MCF 10A (cell line): ENCODE measurements at regions of chr22 and their contacts with region 1.

Region 1: GRCh38 chr22:35376728-35377472 is 4.0 kb upstream of the HMOX1 start:
- DNase-seq: peak; percentile 98
- H3K4me3 Mint-ChIP-seq: no peak overlapping the region
- H3K27ac Mint-ChIP-seq: peak overlapping the region; percentile 93
- H3K4me1 Mint-ChIP-seq: peaks cover 35% of the 10 kb centered on the region
- H3K27me3 Mint-ChIP-seq: no peaks in the 10 kb centered on the region
- CTCF ChIP-seq: no peak

Region 2: GRCh38 chr22:35128637-35129036 is 248.3 kb before region 1 on chr22:
- CTCF ChIA-PET with region 1: no interaction called
- POLR2A ChIA-PET with region 1: no interaction called
- intact Hi-C with region 1: no loop called
- DNase-seq: no peak
- H3K4me3 Mint-ChIP-seq: no peak overlapping the region
- H3K27ac Mint-ChIP-seq: no peak overlapping the region
- H3K4me1 Mint-ChIP-seq: no peaks in the 10 kb centered on the region
- H3K27me3 Mint-ChIP-seq: peaks cover 6% of the 10 kb centered on the region
- CTCF ChIP-seq: no peak

Region 3: DNA sequence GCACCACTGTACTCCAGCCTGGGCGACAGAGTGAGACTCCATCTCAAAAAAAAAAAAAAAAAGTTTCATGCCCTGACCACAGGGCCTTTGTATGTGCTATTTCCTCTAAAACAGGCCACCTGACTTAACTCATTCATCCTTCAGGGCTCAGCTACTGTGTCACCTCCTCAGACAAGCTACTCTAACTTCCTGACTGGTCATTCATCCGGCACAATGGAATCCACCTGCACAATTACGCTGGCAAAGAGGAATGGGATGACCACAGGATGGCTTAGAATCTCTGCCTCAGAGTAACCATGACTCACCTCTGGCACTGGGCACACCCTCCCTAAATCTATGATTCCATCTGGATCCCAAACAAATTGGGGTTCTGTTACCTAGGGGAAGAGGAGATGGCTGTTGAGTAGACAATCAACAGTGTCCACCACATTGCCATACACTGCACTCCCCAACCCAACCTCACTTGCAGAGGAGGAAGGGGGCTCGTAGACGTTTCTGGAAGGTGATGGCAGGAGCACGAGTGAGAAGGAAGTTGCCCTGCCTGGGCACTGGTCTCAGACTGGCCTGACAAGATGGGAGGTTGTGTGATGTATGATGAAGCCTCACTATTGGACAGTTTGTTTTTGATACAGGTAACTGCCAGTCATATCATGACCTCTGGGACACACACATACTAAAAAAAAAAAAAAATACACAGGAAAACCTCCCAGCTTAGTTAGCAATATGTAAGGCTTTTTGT is 18.8 kb before region 1 on chr22:
- CTCF ChIA-PET with region 1: no interaction called
- POLR2A ChIA-PET with region 1: interaction called, 3 read pairs
- intact Hi-C with region 1: loop called (anchors 2 kb)
- DNase-seq: peak; percentile 74
- H3K4me3 Mint-ChIP-seq: no peak overlapping the region
- H3K27ac Mint-ChIP-seq: no peak overlapping the region
- H3K4me1 Mint-ChIP-seq: peaks cover 6% of the 10 kb centered on the region
- H3K27me3 Mint-ChIP-seq: no peaks in the 10 kb centered on the region
- CTCF ChIP-seq: no peak

Region 4: DNA sequence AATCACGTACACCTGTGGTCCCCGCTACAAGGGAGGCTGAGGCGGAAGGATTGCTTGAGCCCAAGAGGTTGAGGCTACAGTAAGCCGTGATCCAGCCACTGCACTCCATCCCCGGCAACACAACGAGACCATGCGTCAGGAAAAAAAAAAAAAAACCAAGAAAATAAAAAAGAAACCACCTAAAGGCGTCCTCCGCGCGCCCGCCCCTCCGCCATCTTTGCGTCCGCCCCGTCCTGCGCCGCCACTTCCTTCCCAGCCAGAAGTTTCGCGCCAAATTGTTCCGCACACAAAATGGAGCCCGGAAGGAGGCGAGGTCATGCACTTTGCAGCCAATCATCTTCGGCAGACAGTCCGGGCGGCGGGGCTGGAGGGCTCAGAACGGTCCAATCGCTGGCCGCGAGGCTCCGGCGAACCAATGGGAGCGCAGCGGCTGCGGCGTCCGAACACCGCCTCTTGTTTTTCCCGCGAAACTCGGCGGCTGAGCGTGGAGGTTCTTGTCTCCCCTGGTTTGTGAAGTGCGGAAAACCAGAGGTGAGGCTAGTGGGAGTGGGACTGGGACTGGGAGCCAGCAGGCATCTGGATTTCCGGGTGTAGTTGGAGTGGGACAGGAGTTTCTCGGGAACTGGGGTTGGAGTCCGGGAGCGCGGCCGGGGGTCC is 22.9 kb after region 1 on chr22 and contains the start of gene MCM5:
- CTCF ChIA-PET with region 1: no interaction called
- POLR2A ChIA-PET with region 1: interaction called, 3 read pairs
- intact Hi-C with region 1: loop called (anchors 2 kb)
- DNase-seq: peak; percentile 97
- H3K4me3 Mint-ChIP-seq: peak within 1 kb of the TSS; percentile 99
- H3K27ac Mint-ChIP-seq: peak within 1 kb of the TSS; percentile 90
- H3K4me1 Mint-ChIP-seq: peaks cover 13% of the 10 kb centered on the region
- H3K27me3 Mint-ChIP-seq: no peaks in the 10 kb centered on the region
- CTCF ChIP-seq: no peak
- total RNA-seq, gene MCM5: 26.2 and 35.0 TPM in 2 replicates

Region 5: DNA sequence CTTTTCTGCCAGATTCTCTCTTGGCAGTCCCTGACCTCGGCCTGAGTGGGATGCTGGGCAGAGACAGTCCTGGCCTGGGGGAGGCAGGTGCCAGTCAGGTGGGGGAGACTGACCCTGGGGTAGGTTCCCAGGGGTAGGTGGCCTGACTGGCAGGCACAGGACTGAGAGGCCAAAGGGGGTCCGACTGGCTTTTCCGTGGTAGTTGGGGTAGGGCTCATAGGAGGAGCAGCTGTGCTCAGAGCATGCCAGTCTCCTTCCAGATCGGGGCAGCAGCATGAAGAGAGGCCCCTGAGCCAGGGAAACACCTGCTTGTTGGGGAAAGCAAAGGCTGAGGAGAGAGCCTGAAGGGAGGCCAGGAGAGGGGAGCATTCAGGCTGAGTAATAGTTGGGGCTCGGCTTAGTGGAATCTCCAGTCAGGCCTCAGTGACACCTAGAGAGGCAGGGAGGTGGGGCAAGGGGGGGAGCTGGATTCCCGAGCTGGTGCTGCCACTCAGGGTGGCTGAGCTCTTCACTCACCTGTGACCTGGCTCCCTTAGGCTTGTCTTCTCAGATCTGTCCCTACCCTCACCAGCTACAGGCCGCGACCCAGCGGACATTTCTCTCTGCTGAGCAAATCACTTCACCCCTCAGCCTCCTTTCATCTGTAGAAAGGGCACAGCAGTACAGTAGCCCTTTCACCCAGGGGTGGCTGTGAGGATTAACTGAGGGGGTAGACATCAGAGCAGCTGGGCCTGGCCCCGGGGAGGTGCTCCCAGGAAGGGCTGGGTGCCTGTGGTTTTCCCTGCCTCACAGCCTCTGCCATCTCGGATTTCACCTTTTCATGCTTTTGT is 49.3 kb after region 1 on chr22:
- CTCF ChIA-PET with region 1: no interaction called
- POLR2A ChIA-PET with region 1: no interaction called
- intact Hi-C with region 1: no loop called
- DNase-seq: peak; percentile 22
- H3K4me3 Mint-ChIP-seq: no peak overlapping the region
- H3K27ac Mint-ChIP-seq: peak overlapping the region; percentile 67
- H3K4me1 Mint-ChIP-seq: peaks cover 11% of the 10 kb centered on the region
- H3K27me3 Mint-ChIP-seq: no peaks in the 10 kb centered on the region
- CTCF ChIP-seq: no peak